ENCODE measurements at regions of chrX and their contacts with region 1.

Region 1: DNA sequence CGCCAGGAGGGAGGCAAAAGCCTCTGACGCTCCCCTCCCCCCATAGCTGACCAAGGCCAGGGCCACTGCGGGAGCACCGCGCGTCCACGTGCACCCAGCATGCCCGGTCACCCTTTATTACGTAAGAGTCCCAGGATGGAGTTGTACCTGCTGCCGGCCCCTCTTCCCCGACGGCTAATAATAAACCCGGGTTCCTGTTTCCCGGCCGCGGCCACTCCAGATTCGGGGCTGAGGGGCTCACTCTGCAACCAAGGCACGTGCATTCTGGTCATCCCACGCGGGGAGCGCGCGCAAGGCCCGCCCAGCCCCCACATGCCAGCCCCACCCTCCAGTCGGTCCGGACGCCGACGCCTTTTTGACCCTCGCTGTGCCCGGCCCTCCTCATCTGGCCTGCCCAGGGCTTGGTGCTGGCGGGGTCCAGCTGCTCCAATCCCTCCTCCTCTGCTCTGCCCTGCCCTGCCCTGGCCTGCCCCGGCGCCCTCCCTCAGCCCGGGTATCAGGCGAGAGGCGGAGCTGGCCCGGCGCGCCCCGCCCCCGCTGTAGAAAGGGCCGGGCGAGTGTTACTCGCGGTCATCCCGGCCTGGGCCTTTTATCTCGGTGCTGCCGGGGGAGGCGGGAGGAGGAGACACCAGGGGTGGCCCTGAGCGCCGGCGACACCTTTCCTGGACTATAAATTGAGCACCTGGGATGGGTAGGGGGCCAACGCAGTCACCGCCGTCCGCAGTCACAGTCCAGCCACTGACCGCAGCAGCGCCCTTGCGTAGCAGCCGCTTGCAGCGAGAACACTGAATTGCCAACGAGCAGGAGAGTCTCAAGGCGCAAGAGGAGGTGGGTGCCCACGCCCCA is 2.5 kb downstream of the MID1IP1 start:
- DNase-seq: peak; percentile 27 to 77 (median 48)
- ATAC-seq: peak; percentile 32 to 35
- H3K4me3 Mint-ChIP-seq: peak overlapping the region; percentile 89 to 96 (median 92)
- H3K27ac Mint-ChIP-seq: peak overlapping the region; percentile 91 to 99 (median 96)
- H3K4me1 Mint-ChIP-seq: peaks cover 7 to 49% (median 24%) of the 10 kb centered on the region in 4 donors
- H3K27me3 Mint-ChIP-seq: no peaks in the 10 kb centered on the region

Region 2: GRCh38 chrX:38817004-38817703 is 13.3 kb after region 1 on chrX:
- POLR2A ChIA-PET with region 1: interaction called, 104 read pairs
- DNase-seq: peak in 2 of 10 donors; percentile 17 to 62
- ATAC-seq: peak; percentile 53 to 54
- H3K4me3 Mint-ChIP-seq: peak overlapping the region in 4 of 10 donors; percentile 46 to 49 (median 47)
- H3K27ac Mint-ChIP-seq: no peak overlapping the region
- H3K4me1 Mint-ChIP-seq: peaks cover 4 to 18% (median 13%) of the 10 kb centered on the region in 4 donors
- H3K27me3 Mint-ChIP-seq: no peaks in the 10 kb centered on the region

Region 3: GRCh38 chrX:38879631-38880220 is 75.9 kb after region 1 on chrX:
- POLR2A ChIA-PET with region 1: interaction called, 24 read pairs
- DNase-seq: peak in 4 of 10 donors; percentile 16 to 30 (median 16)
- ATAC-seq: peak; percentile 59 to 80
- H3K4me3 Mint-ChIP-seq: peak overlapping the region in 8 of 10 donors; percentile 39 to 70 (median 50)
- H3K27ac Mint-ChIP-seq: peak overlapping the region in 3 of 10 donors; percentile 38 to 51 (median 44)
- H3K4me1 Mint-ChIP-seq: peaks cover 5 to 32% (median 18%) of the 10 kb centered on the region in 4 donors
- H3K27me3 Mint-ChIP-seq: no peaks in the 10 kb centered on the region